Activated B cell treated with CpG ODN at 0.5 μM for 24 hours (primary cell): ENCODE measurements at regions of chr7 and their contacts with region 1.

Region 1: GRCh38 chr7:8056431-8056830 is 87.8 kb downstream of the GLCCI1 start:
- DNase-seq: no peak
- ATAC-seq: no peak
- H3K4me3 Mint-ChIP-seq: no peak overlapping the region
- H3K27ac Mint-ChIP-seq: no peak overlapping the region
- H3K4me1 Mint-ChIP-seq: peaks cover 2% of the 10 kb centered on the region
- H3K27me3 Mint-ChIP-seq: no peaks in the 10 kb centered on the region
- CTCF ChIP-seq: no peak

Region 2: DNA sequence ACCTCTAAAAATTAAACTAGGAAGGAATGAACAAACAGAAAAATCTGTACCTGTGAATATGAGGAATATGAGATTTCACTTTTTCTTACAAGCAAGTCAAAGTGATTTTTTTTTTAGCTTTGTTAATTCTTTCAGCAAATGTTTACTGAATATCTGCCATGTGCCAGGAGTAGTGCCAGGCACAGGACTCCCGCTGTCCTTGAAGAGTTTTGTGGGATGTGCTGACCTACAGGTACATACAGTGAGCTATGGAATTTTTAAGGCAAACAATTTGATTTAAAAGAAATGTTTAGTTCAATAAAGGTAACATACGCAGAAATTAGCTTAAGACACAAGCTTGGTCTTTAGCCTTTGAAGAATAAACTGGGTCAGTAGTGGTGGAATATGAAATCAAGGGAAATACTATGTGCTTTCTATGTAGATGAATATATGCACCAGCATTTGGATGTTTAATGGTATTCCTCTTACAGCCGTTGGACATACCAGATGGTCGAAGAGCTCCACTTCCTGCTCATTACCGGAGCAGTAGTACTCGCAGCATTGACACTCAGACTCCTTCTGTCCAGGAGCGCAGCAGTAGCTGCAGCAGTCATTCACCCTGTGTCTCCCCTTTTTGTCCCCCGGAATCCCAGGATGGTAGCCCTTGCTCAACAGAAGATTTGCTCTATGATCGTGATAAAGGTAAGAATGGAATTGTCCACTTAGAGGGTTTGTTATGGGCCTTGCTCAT is 14.2 kb after region 1 on chr7:
- CTCF ChIA-PET with region 1: no interaction called
- POLR2A ChIA-PET with region 1: no interaction called
- intact Hi-C with region 1: loop called (anchors 2 kb)
- DNase-seq: no peak
- ATAC-seq: no peak
- H3K4me3 Mint-ChIP-seq: no peak overlapping the region
- H3K27ac Mint-ChIP-seq: no peak overlapping the region
- H3K4me1 Mint-ChIP-seq: peaks cover 3% of the 10 kb centered on the region
- H3K27me3 Mint-ChIP-seq: no peaks in the 10 kb centered on the region
- CTCF ChIP-seq: no peak

Region 3: DNA sequence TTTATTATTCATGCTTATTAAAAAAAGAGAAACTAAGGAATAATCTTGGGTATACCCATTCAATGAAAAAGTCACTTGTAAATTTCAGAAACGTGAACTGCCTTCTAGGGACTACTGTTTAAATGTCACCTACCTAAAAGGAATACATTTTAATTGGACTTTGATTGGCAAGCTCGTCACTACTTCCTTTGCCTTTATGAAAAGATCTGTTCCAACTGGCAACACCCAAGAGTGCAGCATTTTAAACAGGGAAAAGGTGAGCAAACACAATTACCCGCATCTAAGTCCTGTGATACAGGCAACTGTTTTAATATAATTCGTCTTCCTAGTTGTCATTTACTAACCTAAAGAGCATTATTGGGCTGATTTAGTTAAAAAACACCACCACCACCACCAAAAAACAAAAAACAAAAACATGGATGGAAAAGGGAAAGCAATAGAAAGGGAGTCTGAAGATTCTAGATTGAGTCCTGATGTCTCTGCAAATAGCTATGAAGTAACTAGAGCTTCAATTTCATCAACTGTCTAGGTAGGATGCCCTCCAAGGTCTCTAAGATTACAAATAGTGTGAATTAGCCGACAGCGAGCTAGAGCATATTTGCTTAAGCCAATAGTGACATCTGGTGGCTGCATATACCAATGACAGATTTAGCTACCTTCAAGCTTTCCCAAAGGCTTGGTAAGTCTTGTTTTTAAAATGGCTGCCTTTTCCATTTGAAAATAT is 239.4 kb after region 1 on chr7:
- CTCF ChIA-PET with region 1: no interaction called
- POLR2A ChIA-PET with region 1: no interaction called
- intact Hi-C with region 1: no loop called
- DNase-seq: no peak
- ATAC-seq: peak; percentile 67
- H3K4me3 Mint-ChIP-seq: no peak overlapping the region
- H3K27ac Mint-ChIP-seq: no peak overlapping the region
- H3K4me1 Mint-ChIP-seq: no peaks in the 10 kb centered on the region
- H3K27me3 Mint-ChIP-seq: peaks cover 6% of the 10 kb centered on the region
- CTCF ChIP-seq: no peak